Activated CD4-positive, alpha-beta memory T cell treated with anti-CD3 and anti-CD28 coated beads, Interleukin-2, amount 10 ng/mL, durations not matched to agents 7 days and 5 days (primary cell): ENCODE measurements at regions of chr21 and their contacts with region 1.

Region 1: GRCh38 chr21:33360881-33361602 is 36.3 kb downstream of the IFNAR1 start:
- DNase-seq: peak; percentile 87
- H3K4me3 Mint-ChIP-seq: peak overlapping the region; percentile 70
- H3K27ac Mint-ChIP-seq: peak overlapping the region; percentile 67
- H3K4me1 Mint-ChIP-seq: peaks cover 25% of the 10 kb centered on the region
- H3K27me3 Mint-ChIP-seq: peaks cover 1% of the 10 kb centered on the region

Region 2: DNA sequence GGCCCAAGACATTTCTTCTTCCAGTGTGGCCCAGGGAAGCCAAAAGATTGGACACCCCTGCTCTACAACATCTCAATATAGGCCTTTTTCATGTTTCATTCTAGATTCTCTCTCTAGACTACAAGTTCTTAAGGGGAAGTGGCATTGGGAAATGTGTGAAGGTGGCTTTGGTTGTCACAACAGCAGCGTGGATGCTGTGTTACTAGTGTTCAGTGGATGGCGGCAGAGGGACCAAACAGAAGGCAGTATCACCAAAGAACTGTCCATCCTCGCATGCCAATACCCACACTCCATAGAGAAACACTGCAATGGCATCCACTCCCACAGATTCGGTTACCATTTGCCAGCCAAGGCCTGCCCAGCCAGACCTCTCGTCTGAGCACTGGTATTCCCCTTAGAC is 155.6 kb before region 1 on chr21:
- CTCF ChIA-PET with region 1: interaction called, 13 read pairs
- POLR2A ChIA-PET with region 1: interaction called, 6 read pairs
- DNase-seq: peak; percentile 43
- H3K4me3 Mint-ChIP-seq: peak overlapping the region; percentile 63
- H3K27ac Mint-ChIP-seq: peak overlapping the region; percentile 77
- H3K4me1 Mint-ChIP-seq: peaks cover 32% of the 10 kb centered on the region
- H3K27me3 Mint-ChIP-seq: no peaks in the 10 kb centered on the region

Region 3: GRCh38 chr21:33332143-33332542 is 28.9 kb before region 1 on chr21:
- CTCF ChIA-PET with region 1: interaction called, 55 read pairs
- POLR2A ChIA-PET with region 1: interaction called, 21 read pairs
- DNase-seq: peak; percentile 32
- H3K4me3 Mint-ChIP-seq: no peak overlapping the region
- H3K27ac Mint-ChIP-seq: peak overlapping the region; percentile 73
- H3K4me1 Mint-ChIP-seq: peaks cover 46% of the 10 kb centered on the region
- H3K27me3 Mint-ChIP-seq: no peaks in the 10 kb centered on the region

Region 4: GRCh38 chr21:33348706-33349105 is 12.3 kb before region 1 on chr21:
- CTCF ChIA-PET with region 1: interaction called, 87 read pairs
- POLR2A ChIA-PET with region 1: interaction called, 7 read pairs
- DNase-seq: no peak
- H3K4me3 Mint-ChIP-seq: no peak overlapping the region
- H3K27ac Mint-ChIP-seq: no peak overlapping the region
- H3K4me1 Mint-ChIP-seq: no peaks in the 10 kb centered on the region
- H3K27me3 Mint-ChIP-seq: no peaks in the 10 kb centered on the region

Region 5: DNA sequence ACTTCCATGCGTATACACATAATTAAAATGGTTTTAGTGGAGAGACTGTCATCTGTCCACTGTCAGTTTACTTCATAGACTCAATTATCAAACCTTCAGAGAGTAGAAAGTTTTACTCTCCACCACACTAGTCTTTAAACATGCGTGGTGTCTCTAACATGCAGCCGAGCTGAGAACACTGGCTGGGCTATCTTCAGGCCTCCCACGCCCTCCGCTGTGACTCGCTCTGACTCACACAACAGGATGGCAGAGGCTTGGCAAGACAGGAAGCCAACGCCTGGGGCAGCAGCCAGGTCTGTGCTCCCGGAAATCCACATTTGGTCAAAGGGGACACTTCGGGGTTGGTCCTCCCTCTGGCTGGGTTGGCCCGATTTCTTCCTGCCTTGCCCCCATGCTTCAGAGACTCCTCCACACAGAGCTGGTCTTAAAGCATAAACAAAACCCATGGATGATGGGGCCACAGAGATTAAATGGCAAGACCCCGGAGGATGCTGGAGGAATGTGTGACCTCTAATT is 19.5 kb after region 1 on chr21:
- CTCF ChIA-PET with region 1: interaction called, 30 read pairs
- POLR2A ChIA-PET with region 1: interaction called, 15 read pairs
- DNase-seq: peak; percentile 88
- H3K4me3 Mint-ChIP-seq: no peak overlapping the region
- H3K27ac Mint-ChIP-seq: peak overlapping the region; percentile 67
- H3K4me1 Mint-ChIP-seq: peaks cover 63% of the 10 kb centered on the region
- H3K27me3 Mint-ChIP-seq: peaks cover 61% of the 10 kb centered on the region

Region 6: GRCh38 chr21:33434770-33435360 is 73.8 kb after region 1 on chr21:
- CTCF ChIA-PET with region 1: interaction called, 15 read pairs
- POLR2A ChIA-PET with region 1: interaction called, 5 read pairs
- DNase-seq: peak; percentile 34
- H3K4me3 Mint-ChIP-seq: peak overlapping the region; percentile 12
- H3K27ac Mint-ChIP-seq: peak overlapping the region; percentile 74
- H3K4me1 Mint-ChIP-seq: peaks cover 31% of the 10 kb centered on the region
- H3K27me3 Mint-ChIP-seq: no peaks in the 10 kb centered on the region

Region 7: DNA sequence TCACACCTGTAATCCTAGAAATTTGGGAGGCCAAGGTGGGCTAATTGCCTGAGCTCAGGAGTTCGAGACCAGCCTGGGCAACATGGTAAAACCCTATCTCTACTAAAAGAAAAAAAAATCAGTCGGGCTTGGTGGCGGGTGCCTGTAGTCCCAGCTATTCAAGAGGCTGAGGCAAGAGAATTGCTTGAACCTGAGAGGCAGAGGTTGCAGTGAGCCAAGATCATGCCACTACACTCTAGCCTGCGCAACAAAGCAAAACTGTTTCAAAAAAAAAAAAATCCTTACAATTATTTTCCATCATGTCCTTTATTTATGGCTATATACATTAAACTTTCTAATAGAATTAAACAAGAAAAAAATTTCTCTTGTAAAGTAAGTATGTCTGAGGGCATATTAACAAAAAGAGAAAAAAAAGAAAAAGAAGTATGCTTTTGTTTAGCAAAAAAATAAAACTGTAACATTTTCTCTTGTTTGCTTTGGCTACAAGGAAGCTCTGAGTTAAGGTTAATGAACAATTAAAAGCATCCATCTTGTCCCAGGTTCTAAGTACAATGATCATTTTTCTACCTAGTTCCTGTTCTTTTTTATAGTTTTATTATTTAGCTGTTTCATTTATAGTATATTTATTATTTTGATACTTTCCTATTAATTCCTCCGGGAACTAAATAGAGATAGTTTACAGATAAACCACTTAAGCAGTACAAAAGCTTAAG is 100.7 kb after region 1 on chr21:
- CTCF ChIA-PET with region 1: no interaction called
- POLR2A ChIA-PET with region 1: no interaction called
- DNase-seq: no peak
- H3K4me3 Mint-ChIP-seq: no peak overlapping the region
- H3K27ac Mint-ChIP-seq: no peak overlapping the region
- H3K4me1 Mint-ChIP-seq: no peaks in the 10 kb centered on the region
- H3K27me3 Mint-ChIP-seq: no peaks in the 10 kb centered on the region

Region 8: GRCh38 chr21:33479679-33480480 is 118.8 kb after region 1 on chr21 and contains the start of gene TMEM50B:
- CTCF ChIA-PET with region 1: interaction called, 17 read pairs
- POLR2A ChIA-PET with region 1: interaction called, 6 read pairs
- DNase-seq: peak; percentile 96
- H3K4me3 Mint-ChIP-seq: peak within 1 kb of the TSS; percentile 90
- H3K27ac Mint-ChIP-seq: peak within 1 kb of the TSS; percentile 81
- H3K4me1 Mint-ChIP-seq: peaks cover 21% of the 10 kb centered on the region
- H3K27me3 Mint-ChIP-seq: peaks cover 4% of the 10 kb centered on the region
- total RNA-seq, gene TMEM50B: 26.5 to 28.2 TPM